Activated naive CD4-positive, alpha-beta T cell treated with anti-CD3 and anti-CD28 coated beads for 36 hours (primary cell): ENCODE measurements at regions of chr3 and their contacts with region 1.

Region 1: DNA sequence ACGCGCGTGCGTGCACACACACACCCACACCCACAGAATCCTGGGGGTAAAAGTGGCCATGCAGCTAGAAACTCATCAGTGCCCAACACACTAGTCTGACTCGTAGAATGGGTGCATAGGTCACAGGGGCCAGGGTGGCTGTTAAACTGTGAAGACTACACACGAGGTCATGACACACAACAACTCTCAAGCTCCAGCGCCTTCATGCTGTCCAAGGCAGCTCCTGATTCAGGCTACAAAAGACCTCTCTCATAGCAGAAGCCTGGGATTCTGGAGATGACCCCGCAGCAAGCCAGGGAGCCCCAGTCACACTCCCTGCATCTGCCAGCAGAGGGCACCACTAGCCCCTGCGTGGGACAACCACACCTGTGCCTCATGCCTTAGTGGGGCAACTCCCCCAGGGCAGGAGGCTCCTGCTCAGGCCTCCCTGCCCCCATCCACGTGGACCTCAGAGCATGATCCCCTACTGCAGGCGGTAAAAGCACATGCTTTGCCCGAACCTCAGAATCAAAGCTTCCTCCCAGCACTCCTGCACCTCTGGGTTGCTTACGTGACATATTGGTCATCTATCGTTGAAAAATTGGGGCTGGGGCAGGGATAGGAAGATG is 93.1 kb downstream of the LRIG1 start:
- DNase-seq: peak; percentile 81
- H3K4me3 Mint-ChIP-seq: no peak overlapping the region
- H3K27ac Mint-ChIP-seq: no peak overlapping the region
- H3K4me1 Mint-ChIP-seq: peaks cover 3% of the 10 kb centered on the region
- H3K27me3 Mint-ChIP-seq: no peaks in the 10 kb centered on the region

Region 2: GRCh38 chr3:66394019-66394752 is 13.5 kb before region 1 on chr3:
- CTCF ChIA-PET with region 1: interaction called, 11 read pairs
- intact Hi-C with region 1: no loop called
- DNase-seq: peak; percentile 75
- H3K4me3 Mint-ChIP-seq: peak overlapping the region; percentile 73
- H3K27ac Mint-ChIP-seq: peak overlapping the region; percentile 82
- H3K4me1 Mint-ChIP-seq: peaks cover 48% of the 10 kb centered on the region
- H3K27me3 Mint-ChIP-seq: no peaks in the 10 kb centered on the region

Region 3: DNA sequence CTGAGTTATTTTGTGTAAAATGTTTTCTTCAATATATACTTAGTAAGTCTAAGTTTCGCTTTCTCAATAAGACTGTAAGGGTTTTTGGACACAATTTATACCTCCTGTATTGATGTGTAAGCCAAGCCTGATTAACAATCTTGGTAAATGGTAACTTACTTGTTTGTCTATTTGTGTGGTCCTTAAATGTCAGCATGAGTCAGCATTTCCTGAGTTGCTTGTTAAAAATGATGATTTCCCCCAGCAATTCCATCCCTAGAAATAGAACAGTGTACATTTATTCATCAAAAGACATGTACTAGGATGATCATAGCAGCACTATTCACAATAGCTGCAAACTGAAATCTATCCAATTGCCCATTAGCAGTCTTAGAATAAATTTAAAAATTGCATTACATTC is 146.5 kb after region 1 on chr3:
- CTCF ChIA-PET with region 1: interaction called, 3 read pairs
- intact Hi-C with region 1: loop called (anchors 1 kb)
- DNase-seq: no peak
- H3K4me3 Mint-ChIP-seq: no peak overlapping the region
- H3K27ac Mint-ChIP-seq: no peak overlapping the region
- H3K4me1 Mint-ChIP-seq: peaks cover 3% of the 10 kb centered on the region
- H3K27me3 Mint-ChIP-seq: no peaks in the 10 kb centered on the region

Region 4: DNA sequence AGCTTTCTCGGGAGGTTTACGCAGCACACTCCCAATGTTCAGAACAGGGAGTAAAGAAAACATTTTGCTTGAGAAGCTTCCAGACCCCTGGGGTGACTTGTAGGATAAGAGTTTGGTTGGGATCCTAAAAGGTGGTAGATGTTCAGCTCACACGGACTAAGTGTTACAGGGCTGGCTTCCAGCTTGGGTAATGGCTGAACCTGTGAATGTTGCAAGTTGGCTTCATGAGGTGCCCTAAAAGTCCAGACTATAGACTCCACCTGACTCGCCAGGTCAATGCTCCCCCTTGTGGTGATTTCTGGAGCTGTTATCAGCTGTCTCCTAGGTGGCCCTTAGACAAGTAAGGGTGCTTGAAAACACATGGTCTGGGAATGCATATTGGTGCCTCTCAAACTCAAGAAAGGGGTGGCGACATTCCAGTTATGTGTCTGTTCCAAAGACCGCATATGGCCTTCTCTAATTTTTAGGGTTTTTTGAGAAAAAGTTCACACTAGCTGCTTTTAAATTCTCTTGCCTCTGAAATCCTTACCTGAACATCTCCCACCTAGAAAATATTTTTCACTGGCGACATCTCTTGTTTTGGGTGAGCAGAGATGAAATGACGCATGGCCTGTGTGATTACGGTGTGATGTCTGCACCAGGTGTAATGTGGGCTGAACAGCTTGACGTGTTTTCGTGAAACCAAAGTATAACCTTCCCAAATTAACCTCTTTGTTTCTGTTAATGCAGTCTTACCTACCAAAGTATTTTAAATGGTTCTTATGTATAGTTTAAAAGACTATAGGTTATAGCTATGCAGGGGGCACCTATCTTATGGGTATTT is 414.7 kb after region 1 on chr3:
- CTCF ChIA-PET with region 1: interaction called, 19 read pairs
- intact Hi-C with region 1: no loop called
- DNase-seq: peak; percentile 81
- H3K4me3 Mint-ChIP-seq: no peak overlapping the region
- H3K27ac Mint-ChIP-seq: no peak overlapping the region
- H3K4me1 Mint-ChIP-seq: no peaks in the 10 kb centered on the region
- H3K27me3 Mint-ChIP-seq: no peaks in the 10 kb centered on the region